ENCODE measurements at regions of chr6 and their contacts with region 1.

Region 1: GRCh38 chr6:32413427-32414047 is 6.6 kb upstream of the BTNL2 start:
- H3K4me3 ChIP-seq: no peak overlapping the region
- H3K27ac ChIP-seq: no peak overlapping the region
- H3K4me1 ChIP-seq: no peaks in the 10 kb centered on the region
- CTCF ChIP-seq: peak; percentile 91

Region 2: GRCh38 chr6:32244946-32245398 is 168.6 kb before region 1 on chr6:
- CTCF ChIA-PET with region 1: interaction called, 25 read pairs
- POLR2A ChIA-PET with region 1: no interaction called
- H3K4me3 ChIP-seq: no peak overlapping the region
- H3K27ac ChIP-seq: no peak overlapping the region
- H3K4me1 ChIP-seq: no peaks in the 10 kb centered on the region
- CTCF ChIP-seq: peak; percentile 87

Region 3: GRCh38 chr6:32402812-32403211 is 10.7 kb before region 1 on chr6:
- CTCF ChIA-PET with region 1: interaction called, 28 read pairs
- POLR2A ChIA-PET with region 1: no interaction called
- H3K4me3 ChIP-seq: no peak overlapping the region
- H3K27ac ChIP-seq: no peak overlapping the region
- H3K4me1 ChIP-seq: no peaks in the 10 kb centered on the region
- CTCF ChIP-seq: no peak

Region 4: DNA sequence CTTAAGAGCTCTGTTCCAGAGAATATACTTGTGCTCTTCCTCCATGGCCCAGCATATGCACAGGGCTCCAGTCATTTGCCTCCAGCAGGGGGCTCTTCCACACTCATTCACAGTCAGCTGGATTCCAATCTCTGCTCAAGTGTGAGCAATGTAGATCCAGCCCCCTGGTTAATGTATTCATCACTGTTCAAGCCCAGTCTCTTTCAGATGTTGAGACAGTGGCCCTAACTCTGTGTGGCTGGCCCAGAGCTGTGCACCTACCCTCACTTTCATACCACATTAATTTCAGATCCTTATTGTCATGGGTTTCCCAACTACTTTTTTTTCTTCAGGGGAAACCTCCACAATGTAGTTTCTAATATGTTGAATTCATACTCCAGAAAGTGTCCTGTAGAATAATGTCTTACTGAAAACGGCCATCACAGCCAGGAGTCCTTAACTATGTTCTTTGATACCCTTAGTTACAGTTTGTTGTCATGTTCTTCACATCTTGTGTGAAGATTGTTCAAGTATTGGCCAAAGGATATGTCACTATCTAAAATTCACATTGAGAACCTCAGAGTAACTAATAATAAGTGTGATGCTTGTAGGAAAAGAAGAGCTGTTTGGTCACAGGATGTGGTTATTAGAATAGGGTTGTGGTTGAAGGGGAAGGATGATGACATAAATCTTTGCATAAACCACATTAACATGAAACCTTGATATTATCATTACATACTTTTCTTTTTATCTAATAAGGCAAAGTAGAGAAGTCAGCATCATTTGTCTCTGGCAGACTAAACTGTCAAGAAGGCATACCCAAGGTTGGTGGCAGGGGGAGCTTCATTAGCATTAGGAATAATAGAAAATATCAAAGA is 209.2 kb after region 1 on chr6:
- CTCF ChIA-PET with region 1: interaction called, 16 read pairs
- POLR2A ChIA-PET with region 1: no interaction called
- H3K4me3 ChIP-seq: no peak overlapping the region
- H3K27ac ChIP-seq: no peak overlapping the region
- H3K4me1 ChIP-seq: peaks cover 18% of the 10 kb centered on the region
- CTCF ChIP-seq: no peak

Region 5: DNA sequence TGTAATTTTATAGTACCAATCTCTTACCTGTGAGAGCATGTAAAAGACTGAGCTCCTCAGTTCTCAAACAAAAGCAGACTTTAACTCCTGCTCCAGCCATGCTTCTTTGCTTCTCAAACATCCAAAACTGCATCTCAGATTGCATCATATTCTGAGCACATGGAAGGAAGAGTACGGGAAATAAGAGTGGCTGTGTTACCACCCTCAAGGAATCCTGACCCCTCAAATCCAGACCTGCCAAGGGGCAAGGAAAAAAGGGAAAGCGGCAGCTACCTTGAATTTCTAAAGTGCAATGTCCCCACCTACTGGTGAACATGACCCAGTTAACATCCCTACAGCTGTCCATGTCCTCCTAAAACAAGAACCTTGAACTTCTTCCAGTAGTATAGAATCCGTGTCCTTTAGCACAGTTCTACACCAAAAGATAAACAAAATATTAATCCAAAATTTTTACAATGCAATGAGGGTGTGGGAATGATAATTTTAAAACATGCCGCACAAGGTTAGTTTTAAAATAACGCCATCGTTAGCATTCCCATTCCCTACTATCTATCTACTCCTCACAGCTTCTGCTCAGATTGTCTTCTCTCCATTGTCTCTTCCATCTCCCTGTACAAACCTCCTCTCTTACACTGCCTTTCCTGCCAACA is 287.0 kb after region 1 on chr6:
- CTCF ChIA-PET with region 1: interaction called, 102 read pairs
- POLR2A ChIA-PET with region 1: no interaction called
- H3K4me3 ChIP-seq: no peak overlapping the region
- H3K27ac ChIP-seq: no peak overlapping the region
- H3K4me1 ChIP-seq: no peaks in the 10 kb centered on the region
- CTCF ChIP-seq: peak; percentile 85

Region 6: GRCh38 chr6:32838114-32838958 is 424.8 kb after region 1 on chr6 and contains the start of gene TAP2:
- CTCF ChIA-PET with region 1: interaction called, 12 read pairs
- POLR2A ChIA-PET with region 1: no interaction called
- H3K4me3 ChIP-seq: peak within 1 kb of the TSS; percentile 87
- H3K27ac ChIP-seq: peak within 1 kb of the TSS; percentile 67
- H3K4me1 ChIP-seq: 0 out of 2 replicates have a peak, but pooled peaks cover 3% of the 10 kb centered on the region
- CTCF ChIP-seq: peak; percentile 96